A673 (cell line): ENCODE measurements at regions of chr11 and their contacts with region 1.

Region 1: GRCh38 chr11:98561252-98561651 is 459.5 kb upstream of the CNTN5 start:
- DNase-seq: no peak
- H3K4me3 ChIP-seq: no peak overlapping the region
- H3K27ac ChIP-seq: no peak overlapping the region
- H3K4me1 ChIP-seq: no peaks in the 10 kb centered on the region
- H3K27me3 ChIP-seq: no peaks in the 10 kb centered on the region
- CTCF ChIP-seq: no peak

Region 2: DNA sequence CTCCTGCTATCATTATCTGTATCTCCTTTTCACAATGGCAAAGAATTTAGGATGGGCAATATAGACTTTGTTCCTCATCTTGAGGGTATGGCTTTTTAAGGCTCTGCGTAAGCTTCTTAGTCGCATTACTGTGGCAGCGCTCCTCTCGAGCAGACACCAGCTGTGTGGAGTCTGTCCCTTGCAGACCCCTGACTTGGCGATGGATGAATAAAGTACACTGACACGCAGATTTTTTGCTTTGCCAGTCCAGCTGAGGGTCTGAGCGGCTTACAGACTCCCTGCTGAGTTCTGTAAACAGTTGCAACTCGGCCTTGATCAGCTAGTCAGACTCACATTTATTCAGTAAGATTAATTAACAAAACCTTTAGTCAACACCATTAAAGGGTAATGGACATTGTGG is 69.5 kb after region 1 on chr11:
- CTCF ChIA-PET with region 1: no interaction called
- POLR2A ChIA-PET with region 1: no interaction called
- intact Hi-C with region 1: loop called (anchors 2 kb)
- DNase-seq: no peak
- H3K4me3 ChIP-seq: no peak overlapping the region
- H3K27ac ChIP-seq: no peak overlapping the region
- H3K4me1 ChIP-seq: no peaks in the 10 kb centered on the region
- H3K27me3 ChIP-seq: no peaks in the 10 kb centered on the region
- CTCF ChIP-seq: no peak